ENCODE measurements at regions of chr6 and their contacts with region 1.

Region 1: GRCh38 chr6:169831450-169832246 is 80.2 kb downstream of the ERMARD start:
- DNase-seq: peak; percentile 81
- ATAC-seq: peak; percentile 87
- H3K4me3 Mint-ChIP-seq: no peak overlapping the region
- H3K27ac Mint-ChIP-seq: no peak overlapping the region
- H3K4me1 Mint-ChIP-seq: peaks cover 2% of the 10 kb centered on the region
- H3K27me3 Mint-ChIP-seq: peaks cover 21% of the 10 kb centered on the region
- CTCF ChIP-seq: peak; percentile 96

Region 2: DNA sequence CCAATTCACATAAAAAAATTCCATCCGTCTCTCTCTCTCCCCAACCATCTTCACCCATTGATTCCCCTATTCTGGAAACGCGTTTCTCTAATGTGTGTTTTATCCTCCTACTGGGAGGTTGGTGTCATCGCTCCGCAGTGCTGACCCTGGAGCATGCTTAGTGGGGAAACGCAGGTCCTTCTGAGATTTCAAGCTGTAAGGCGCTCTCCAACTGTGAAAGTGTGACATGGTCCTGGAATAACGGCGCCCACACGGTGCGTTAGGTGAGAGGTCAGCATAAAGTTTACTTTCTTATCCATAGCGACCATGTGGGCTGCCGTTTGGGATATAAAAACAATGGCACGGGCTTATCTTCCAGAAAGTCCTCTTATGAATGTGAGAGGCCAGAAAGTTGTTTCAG is 253.7 kb before region 1 on chr6:
- CTCF ChIA-PET with region 1: no interaction called
- POLR2A ChIA-PET with region 1: no interaction called
- intact Hi-C with region 1: no loop called
- DNase-seq: no peak
- ATAC-seq: no peak
- H3K4me3 Mint-ChIP-seq: no peak overlapping the region
- H3K27ac Mint-ChIP-seq: no peak overlapping the region
- H3K4me1 Mint-ChIP-seq: no peaks in the 10 kb centered on the region
- H3K27me3 Mint-ChIP-seq: no peaks in the 10 kb centered on the region
- CTCF ChIP-seq: no peak

Region 3: DNA sequence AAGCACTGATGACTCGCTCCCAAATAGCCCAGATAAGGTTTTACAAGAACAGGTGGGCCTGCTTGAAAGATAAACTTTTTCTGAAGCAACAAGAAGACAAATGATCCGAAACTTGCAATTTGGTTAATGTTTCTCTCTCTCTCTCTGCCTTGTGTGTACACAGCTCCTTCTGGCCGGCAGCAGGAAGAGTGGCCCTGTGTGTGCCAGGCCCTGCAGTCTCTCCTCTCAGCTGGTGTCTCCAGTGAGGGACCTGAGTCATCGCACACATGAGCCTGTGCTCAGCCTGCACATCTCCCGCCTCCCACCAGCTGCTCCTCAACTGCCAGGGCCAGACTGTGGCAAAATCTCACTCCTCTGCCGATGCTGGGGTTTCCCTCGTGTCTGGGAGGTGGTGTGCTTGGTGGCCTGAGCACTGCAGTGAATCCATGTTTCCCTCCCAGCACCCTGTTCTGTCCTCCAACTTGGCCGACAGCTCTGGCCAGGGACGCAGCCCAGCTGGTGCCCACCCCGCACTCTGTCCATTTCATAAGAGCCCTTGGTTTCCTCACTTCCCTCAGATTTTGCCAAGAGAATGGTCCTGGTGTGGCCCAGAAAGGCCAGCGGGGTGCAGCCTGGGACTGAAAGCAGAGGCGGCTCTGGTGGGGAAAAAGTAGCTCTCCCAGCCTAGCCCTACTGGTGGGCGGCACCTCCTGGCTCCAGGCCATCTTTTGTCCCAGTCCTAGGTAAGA is 30.8 kb before region 1 on chr6:
- CTCF ChIA-PET with region 1: interaction called, 33 read pairs
- POLR2A ChIA-PET with region 1: no interaction called
- intact Hi-C with region 1: no loop called
- DNase-seq: no peak
- ATAC-seq: peak; percentile 45
- H3K4me3 Mint-ChIP-seq: no peak overlapping the region
- H3K27ac Mint-ChIP-seq: no peak overlapping the region
- H3K4me1 Mint-ChIP-seq: peaks cover 35% of the 10 kb centered on the region
- H3K27me3 Mint-ChIP-seq: peaks cover 42% of the 10 kb centered on the region
- CTCF ChIP-seq: no peak

Region 4: GRCh38 chr6:169859978-169860703 is 28.5 kb after region 1 on chr6:
- CTCF ChIA-PET with region 1: interaction called, 15 read pairs
- POLR2A ChIA-PET with region 1: no interaction called
- intact Hi-C with region 1: no loop called
- DNase-seq: peak; percentile 24
- ATAC-seq: peak; percentile 53
- H3K4me3 Mint-ChIP-seq: no peak overlapping the region
- H3K27ac Mint-ChIP-seq: peak overlapping the region; percentile 71
- H3K4me1 Mint-ChIP-seq: peaks cover 31% of the 10 kb centered on the region
- H3K27me3 Mint-ChIP-seq: no peaks in the 10 kb centered on the region
- CTCF ChIP-seq: no peak

Region 5: DNA sequence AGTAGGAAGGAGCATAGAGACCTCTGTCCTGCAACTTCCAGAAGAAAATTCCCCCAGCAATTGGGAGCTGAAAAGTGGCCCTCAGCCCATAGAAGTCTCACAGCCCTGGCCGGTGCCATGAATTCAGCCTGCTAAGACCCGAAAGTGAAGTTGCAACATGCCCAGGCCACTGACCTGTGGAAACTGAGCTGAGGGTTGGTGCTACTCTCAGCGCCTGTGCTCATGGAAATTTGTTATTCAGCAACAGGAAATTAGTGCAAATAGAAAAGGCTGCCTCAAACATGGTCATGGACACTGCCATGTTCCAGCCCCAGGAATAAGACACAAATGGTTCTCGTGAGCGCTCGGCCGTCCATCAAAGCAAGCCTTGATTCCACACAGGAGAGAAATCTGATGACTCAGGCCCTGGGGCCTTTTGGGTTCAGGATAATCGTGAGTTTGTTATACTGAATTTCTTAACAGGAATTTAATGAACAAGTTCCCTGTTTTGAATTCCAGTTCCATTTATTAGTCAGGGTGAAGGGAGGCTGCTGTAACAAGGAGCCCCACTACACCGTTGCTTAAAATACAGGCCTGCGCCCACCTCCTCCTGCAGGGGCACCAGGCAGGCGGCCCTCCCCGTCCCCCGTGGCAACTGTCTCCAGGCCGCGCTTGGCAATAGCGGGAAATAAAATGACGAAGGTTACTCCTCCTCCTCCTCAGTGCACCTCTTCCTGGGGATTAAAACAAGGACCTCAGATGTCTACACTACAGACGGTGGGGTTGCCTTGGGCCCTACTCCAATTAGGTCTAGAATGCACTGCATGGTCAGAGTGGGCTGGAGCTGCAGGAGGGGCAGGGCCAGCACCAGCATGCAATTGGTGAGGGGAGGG is 72.6 kb after region 1 on chr6:
- CTCF ChIA-PET with region 1: no interaction called
- POLR2A ChIA-PET with region 1: no interaction called
- intact Hi-C with region 1: no loop called
- DNase-seq: no peak
- ATAC-seq: no peak
- H3K4me3 Mint-ChIP-seq: no peak overlapping the region
- H3K27ac Mint-ChIP-seq: no peak overlapping the region
- H3K4me1 Mint-ChIP-seq: no peaks in the 10 kb centered on the region
- H3K27me3 Mint-ChIP-seq: peaks cover under 1% of the 10 kb centered on the region
- CTCF ChIP-seq: no peak

Region 6: GRCh38 chr6:169926617-169927417 is 95.2 kb after region 1 on chr6:
- CTCF ChIA-PET with region 1: interaction called, 24 read pairs
- POLR2A ChIA-PET with region 1: no interaction called
- intact Hi-C with region 1: loop called (anchors 5 kb)
- DNase-seq: no peak
- ATAC-seq: no peak
- H3K4me3 Mint-ChIP-seq: no peak overlapping the region
- H3K27ac Mint-ChIP-seq: no peak overlapping the region
- H3K4me1 Mint-ChIP-seq: peaks cover 3% of the 10 kb centered on the region
- H3K27me3 Mint-ChIP-seq: peaks cover 15% of the 10 kb centered on the region
- CTCF ChIP-seq: no peak

Region 7: DNA sequence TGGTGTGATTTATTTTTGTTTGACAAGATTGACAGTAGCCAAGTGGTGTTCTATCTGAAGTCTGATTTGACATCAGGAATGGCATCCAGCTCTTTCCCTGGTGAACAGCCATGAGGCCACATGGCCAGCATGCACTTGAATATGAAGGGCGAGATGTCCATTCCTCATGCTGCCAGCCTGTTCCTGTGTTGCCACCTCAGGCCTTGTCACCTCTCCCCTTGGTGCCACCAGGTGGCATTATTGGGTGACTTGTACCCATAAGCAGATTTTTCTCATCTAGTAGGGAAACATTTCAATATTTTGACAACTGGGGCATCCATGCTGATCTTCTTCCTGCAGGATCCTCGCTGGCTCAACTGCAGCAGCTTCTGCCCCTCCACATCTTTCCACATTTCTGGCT is 118.9 kb after region 1 on chr6:
- CTCF ChIA-PET with region 1: interaction called, 47 read pairs
- POLR2A ChIA-PET with region 1: no interaction called
- intact Hi-C with region 1: no loop called
- DNase-seq: peak; percentile 58
- ATAC-seq: peak; percentile 58
- H3K4me3 Mint-ChIP-seq: no peak overlapping the region
- H3K27ac Mint-ChIP-seq: no peak overlapping the region
- H3K4me1 Mint-ChIP-seq: peaks cover 9% of the 10 kb centered on the region
- H3K27me3 Mint-ChIP-seq: no peaks in the 10 kb centered on the region
- CTCF ChIP-seq: peak; percentile 44

Region 8: GRCh38 chr6:170291271-170292110 is 459.8 kb after region 1 on chr6:
- CTCF ChIA-PET with region 1: interaction called, 17 read pairs
- POLR2A ChIA-PET with region 1: no interaction called
- intact Hi-C with region 1: no loop called
- DNase-seq: peak; percentile 68
- ATAC-seq: peak; percentile 50
- H3K4me3 Mint-ChIP-seq: peak overlapping the region; percentile 73
- H3K27ac Mint-ChIP-seq: no peak overlapping the region
- H3K4me1 Mint-ChIP-seq: peaks cover 40% of the 10 kb centered on the region
- H3K27me3 Mint-ChIP-seq: peaks cover 41% of the 10 kb centered on the region
- CTCF ChIP-seq: no peak

Region 9: DNA sequence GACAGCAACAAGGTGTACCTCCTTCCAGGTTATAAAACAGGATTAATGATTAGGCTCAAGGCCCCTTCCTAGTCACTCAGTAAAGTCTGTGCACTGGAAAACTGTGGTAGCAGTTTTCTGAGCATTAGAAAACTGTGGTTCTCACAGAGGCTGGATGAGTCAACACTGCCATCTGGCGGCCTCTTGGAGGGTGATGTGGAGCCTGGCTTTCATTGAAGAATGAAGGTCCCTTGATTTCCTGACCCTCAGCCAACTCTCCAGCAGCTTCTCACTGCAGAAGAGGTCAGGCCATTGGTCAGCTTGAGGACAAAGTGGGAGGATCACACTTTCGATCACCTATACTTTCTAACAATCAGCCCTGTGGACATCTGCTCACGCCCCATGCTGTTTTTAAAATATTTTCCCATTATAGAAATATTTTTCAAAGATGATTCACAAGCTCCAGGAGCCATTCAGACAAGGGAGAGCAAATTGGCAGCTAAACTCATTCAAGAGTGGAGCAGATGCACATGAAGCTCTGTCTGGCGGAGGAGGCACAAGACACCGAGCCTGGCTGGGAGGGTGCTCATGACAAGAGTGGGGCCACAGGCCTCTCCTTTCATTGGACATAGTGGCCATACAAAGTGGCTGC is 698.3 kb after region 1 on chr6:
- CTCF ChIA-PET with region 1: interaction called, 22 read pairs
- POLR2A ChIA-PET with region 1: no interaction called
- intact Hi-C with region 1: loop called (anchors 10 kb)
- DNase-seq: peak; percentile 83
- ATAC-seq: peak; percentile 77
- H3K4me3 Mint-ChIP-seq: no peak overlapping the region
- H3K27ac Mint-ChIP-seq: no peak overlapping the region
- H3K4me1 Mint-ChIP-seq: peaks cover 7% of the 10 kb centered on the region
- H3K27me3 Mint-ChIP-seq: no peaks in the 10 kb centered on the region
- CTCF ChIP-seq: peak; percentile 83

Measured in activated CD8-positive, alpha-beta T cell treated with anti-CD3 and anti-CD28 coated beads for 36 hours (primary cell).